Activated T-helper 1 cell treated with anti-CD3 and anti-CD28 coated beads, Interleukin-12 subunit alpha, Interleukin-12 subunit beta, Interleukin-2, Interleukin-4 antibody, amounts not matched to agents 30 ng/mL and 10 ng/mL and 1 ng/mL, durations not matched to agents 14 hours and 24 hours and 36 hours (primary cell): ENCODE measurements at regions of chr19 and their contacts with region 1.

Region 1: GRCh38 chr19:10461047-10461790 is 40.9 kb downstream of the PDE4A start:
- DNase-seq: peak; percentile 81
- H3K4me3 Mint-ChIP-seq: no peak overlapping the region
- H3K27ac Mint-ChIP-seq: peak overlapping the region; percentile 29
- H3K4me1 Mint-ChIP-seq: no peaks in the 10 kb centered on the region
- H3K27me3 Mint-ChIP-seq: no peaks in the 10 kb centered on the region

Region 2: GRCh38 chr19:10388957-10389356 is 72.3 kb before region 1 on chr19:
- intact Hi-C with region 1: no loop called
- DNase-seq: peak; percentile 61
- H3K4me3 Mint-ChIP-seq: no peak overlapping the region
- H3K27ac Mint-ChIP-seq: no peak overlapping the region
- H3K4me1 Mint-ChIP-seq: peaks cover 11% of the 10 kb centered on the region
- H3K27me3 Mint-ChIP-seq: no peaks in the 10 kb centered on the region

Region 3: DNA sequence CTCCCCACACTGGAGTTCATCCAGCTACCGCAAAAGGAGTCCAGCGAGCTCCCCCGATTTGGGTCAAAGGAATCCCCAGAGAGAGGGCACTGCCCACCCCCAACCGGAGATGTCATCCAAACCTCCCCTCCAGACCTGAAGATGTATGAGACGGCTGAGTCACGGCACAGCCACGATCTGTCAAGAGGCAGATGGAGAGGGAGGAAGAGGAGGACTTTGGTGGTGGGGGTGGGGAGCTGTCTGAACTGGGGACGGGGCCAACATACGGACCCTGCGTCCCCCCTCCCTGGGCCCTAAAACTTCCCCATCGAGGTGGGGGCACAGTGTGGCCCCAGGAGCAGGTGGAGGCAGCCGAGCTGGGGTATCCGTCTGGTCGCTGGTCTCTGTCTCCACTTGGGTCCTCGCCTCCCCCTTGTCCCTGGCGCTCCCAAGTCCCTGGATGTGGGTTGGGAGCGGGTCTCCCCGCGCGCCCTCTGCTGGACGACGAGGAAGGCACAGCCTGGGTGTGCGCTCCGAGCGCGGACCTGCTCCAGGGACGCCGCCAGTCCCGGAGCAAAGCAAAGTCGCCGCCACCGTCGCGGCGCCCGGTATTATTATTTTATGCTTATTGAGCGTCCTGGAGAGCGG is 37.1 kb before region 1 on chr19:
- intact Hi-C with region 1: loop called (anchors 2 kb)
- DNase-seq: peak; percentile 58
- H3K4me3 Mint-ChIP-seq: peak overlapping the region; percentile 85
- H3K27ac Mint-ChIP-seq: peak overlapping the region; percentile 75
- H3K4me1 Mint-ChIP-seq: peaks cover 73% of the 10 kb centered on the region
- H3K27me3 Mint-ChIP-seq: peaks cover 2% of the 10 kb centered on the region

Region 4: DNA sequence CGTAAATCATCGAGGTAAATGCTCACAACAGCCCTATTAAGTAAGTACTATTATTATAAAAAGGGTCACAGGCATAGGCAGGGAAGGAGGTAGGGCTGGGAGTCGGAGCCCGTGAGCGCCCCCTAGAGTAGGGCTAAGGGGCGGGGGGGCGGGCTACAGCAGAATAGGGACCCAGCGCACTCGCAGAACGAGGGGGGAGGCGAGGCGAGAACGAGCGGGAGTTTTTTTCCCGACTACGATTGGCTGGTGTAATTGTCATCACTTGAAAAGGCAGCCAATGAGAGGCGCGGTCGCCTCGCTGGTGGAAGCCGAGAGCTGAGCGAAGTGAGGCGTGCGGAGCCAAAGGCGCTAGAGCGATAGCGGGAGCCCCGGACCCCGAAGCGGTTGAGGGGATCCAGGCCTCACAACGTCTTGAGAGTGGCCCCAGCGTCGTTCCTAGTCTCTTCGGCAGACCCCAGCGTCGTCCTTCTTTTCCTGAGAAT is 17.7 kb after region 1 on chr19:
- intact Hi-C with region 1: loop called (anchors 1 kb)
- DNase-seq: peak; percentile 86
- H3K4me3 Mint-ChIP-seq: peak overlapping the region; percentile 68
- H3K27ac Mint-ChIP-seq: peak overlapping the region; percentile 76
- H3K4me1 Mint-ChIP-seq: peaks cover 16% of the 10 kb centered on the region
- H3K27me3 Mint-ChIP-seq: no peaks in the 10 kb centered on the region

Region 5: DNA sequence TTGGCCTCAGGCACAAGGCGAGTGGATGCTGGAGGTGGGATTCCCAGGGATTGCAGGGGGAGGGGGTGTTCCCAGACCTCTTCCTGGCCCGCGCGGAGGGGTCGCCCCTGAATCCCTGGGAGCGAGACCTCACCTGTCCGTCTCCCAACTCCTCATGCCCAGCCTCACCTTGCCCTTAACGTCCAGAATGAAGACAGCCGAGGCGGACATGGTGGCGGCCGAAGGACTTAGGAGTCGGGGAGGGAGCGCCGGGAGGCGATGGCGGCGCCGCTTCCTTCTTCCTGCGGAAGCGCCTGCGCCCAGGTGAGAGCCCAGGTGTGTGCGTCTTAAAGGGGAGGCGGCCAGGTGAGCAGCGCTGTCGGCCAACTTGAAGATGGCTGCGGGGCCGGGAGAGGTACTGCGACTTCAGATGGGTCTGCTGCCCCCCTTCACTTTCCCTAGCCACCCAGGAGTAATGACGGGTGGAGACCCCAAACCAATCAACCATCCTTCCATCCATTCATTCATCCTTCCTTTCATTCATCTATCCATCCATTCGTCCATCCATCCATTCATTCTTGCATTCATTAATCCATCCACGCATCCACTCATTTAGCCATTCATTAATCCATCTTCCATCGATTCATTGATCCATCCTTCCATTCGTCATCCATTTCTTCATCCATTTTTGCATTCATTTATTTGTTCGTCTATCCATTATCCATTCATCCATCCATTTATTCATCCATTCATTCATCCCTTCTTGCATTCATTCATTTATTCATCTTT is 126.0 kb after region 1 on chr19 and contains the start of gene AP1M2:
- intact Hi-C with region 1: no loop called
- DNase-seq: no peak
- H3K4me3 Mint-ChIP-seq: no peak within 1 kb of the TSS
- H3K27ac Mint-ChIP-seq: no peak within 1 kb of the TSS
- H3K4me1 Mint-ChIP-seq: peaks cover 16% of the 10 kb centered on the region
- H3K27me3 Mint-ChIP-seq: peaks cover 19% of the 10 kb centered on the region
- total RNA-seq, gene AP1M2: not detected in 2 replicates

Region 6: DNA sequence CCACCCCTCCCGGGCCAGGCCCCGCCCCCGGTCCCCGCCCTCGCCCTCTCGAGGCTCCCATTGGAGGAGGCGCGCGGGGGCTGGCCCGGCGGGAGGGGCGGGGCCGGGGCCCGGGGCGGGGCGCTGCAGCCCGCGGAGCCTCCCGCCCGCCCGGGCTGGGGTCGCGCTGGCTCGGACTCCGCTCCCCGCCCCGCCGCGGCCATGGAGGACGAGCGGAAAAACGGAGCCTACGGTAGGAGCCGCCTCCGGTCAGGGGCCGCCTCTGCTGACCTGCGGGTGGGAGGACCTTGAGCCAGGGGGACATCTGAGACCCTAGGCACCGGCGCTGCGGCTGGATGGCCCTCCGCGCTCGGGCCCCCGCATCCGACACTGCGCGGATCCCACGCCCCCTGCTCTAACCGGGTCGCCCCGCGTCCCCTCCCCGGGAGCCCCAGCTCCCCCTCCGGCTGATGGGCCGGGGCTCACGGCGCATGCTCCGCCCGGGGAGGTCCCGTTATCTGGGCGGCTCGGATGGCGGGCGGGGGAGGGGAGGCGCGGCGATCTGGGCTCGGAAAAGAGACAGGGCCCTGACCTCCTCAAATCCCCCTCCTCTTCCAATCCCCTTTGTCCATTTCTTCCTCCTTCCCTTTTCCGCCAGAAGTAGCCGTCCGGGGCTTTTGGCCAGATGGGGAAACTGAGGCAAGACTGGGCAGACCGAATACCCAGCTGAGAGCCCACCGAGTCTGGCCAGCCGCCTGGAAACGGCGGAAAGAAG is 141.3 kb after region 1 on chr19:
- intact Hi-C with region 1: loop called (anchors 1 kb)
- DNase-seq: peak; percentile 75
- H3K4me3 Mint-ChIP-seq: peak overlapping the region; percentile 99
- H3K27ac Mint-ChIP-seq: peak overlapping the region; percentile 100
- H3K4me1 Mint-ChIP-seq: peaks cover 24% of the 10 kb centered on the region
- H3K27me3 Mint-ChIP-seq: peaks cover 8% of the 10 kb centered on the region